PC-3 (cell line): ENCODE measurements at regions of chr7 and their contacts with region 1.

Region 1: DNA sequence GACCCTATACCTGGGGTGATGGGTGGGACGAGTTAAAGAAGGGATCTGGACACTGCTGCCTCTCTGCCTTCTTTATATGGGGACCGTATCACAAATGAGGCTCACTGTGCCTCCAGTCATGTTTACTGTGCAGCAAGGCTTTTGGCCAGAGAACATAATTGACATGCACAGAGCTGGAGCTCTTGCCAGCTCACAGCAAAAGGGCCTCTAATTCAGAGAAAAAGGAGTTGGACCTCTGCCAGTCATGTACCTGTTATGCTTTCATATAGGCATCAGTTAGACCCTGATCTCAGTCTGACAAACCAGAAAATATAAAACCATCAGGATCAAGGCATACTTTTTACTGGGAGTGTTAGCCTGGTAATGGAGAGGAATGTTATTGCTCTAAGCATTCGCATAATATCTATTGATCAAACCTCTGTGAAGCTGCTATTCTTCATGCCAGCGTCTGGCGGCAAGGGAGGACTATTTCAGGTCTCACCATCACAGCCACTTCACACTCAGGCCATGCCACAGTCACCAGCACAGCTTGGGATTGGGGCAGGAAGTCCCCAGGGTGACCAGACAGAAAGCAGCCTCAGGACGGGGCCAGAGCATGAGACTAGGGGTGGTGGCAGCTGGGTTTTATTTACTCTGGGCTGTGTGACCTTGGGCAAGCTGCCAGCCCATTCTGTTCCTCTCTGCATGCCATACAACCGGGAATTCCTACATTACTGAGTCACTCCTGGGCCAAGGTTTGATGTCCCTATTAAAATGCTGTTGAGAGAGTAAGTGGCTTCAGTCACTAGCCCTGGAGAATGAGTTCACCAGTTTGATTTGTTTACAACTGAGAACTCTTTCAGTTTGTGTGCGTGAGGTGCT is 90.1 kb downstream of the NPSR1 start:
- DNase-seq: peak; percentile 97
- ATAC-seq: peak; percentile 94
- H3K4me3 ChIP-seq: peak overlapping the region; percentile 33; the same call in 1 of the 2 replicates
- H3K27ac ChIP-seq: peak overlapping the region; percentile 62
- H3K4me1 ChIP-seq: peaks cover 20% of the 10 kb centered on the region
- H3K27me3 ChIP-seq: no peaks in the 10 kb centered on the region
- CTCF ChIP-seq: no peak

Region 2: GRCh38 chr7:34622182-34622581 is 125.9 kb before region 1 on chr7:
- CTCF ChIA-PET with region 1: no interaction called
- POLR2A ChIA-PET with region 1: no interaction called
- intact Hi-C with region 1: no loop called
- DNase-seq: no peak
- ATAC-seq: no peak
- H3K4me3 ChIP-seq: no peak overlapping the region
- H3K27ac ChIP-seq: no peak overlapping the region
- H3K4me1 ChIP-seq: no peaks in the 10 kb centered on the region
- H3K27me3 ChIP-seq: no peaks in the 10 kb centered on the region
- CTCF ChIP-seq: no peak

Region 3: GRCh38 chr7:35694781-35695472 is 946.8 kb after region 1 on chr7 and contains the start of gene HERPUD2:
- CTCF ChIA-PET with region 1: no interaction called
- POLR2A ChIA-PET with region 1: no interaction called
- intact Hi-C with region 1: loop called (anchors 5 kb)
- DNase-seq: peak; percentile 91
- ATAC-seq: peak; percentile 83
- H3K4me3 ChIP-seq: peak within 1 kb of the TSS; percentile 99
- H3K27ac ChIP-seq: peak within 1 kb of the TSS; percentile 90
- H3K4me1 ChIP-seq: peaks cover 49% of the 10 kb centered on the region
- H3K27me3 ChIP-seq: no peaks in the 10 kb centered on the region
- CTCF ChIP-seq: no peak
- total RNA-seq, gene HERPUD2: 11.5 and 11.7 TPM in 2 replicates